ENCODE measurements at regions of chr10 and their contacts with region 1.

Region 1: DNA sequence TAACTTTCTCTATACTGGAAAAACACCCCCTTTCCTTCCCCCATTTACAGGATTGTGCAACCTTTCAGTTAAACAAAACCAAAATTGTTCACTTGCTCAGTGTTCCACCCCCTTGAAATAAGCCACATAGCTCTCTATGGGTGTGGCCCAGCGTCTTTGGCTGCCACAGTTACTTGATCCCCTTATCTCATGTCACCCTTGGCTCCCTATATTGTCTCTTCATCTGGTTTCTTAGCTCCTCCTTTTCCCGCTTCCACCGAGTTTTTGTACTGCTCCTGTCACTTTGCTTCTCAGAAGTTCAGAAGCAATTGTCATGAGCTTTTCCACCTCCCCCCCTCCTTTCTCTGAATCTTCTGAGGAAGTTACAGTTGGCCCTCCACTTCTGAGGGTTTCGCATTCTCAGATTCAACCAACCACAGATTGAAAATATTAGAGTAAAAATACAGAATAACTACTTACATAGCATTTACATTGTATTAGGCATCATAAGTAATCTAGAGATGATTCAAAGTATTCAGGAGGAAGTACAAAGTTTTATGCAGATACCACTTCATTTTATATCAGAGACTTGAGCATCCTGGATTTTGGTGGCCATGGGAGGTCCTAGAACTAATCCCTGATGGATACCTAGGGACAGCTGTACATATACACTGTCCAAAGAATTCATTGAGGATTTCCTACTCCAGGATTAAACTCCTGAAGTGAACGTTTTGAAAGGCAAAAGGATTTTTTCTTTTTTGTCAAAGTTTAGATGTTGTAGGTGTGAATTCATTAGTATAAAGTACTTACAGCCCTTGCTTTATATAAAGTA is 60.4 kb downstream of the ADD3 start:
- DNase-seq: peak; percentile 92
- H3K4me3 Mint-ChIP-seq: peak overlapping the region; percentile 72
- H3K27ac Mint-ChIP-seq: peak overlapping the region; percentile 90
- H3K4me1 Mint-ChIP-seq: peaks cover 72% of the 10 kb centered on the region
- H3K27me3 Mint-ChIP-seq: no peaks in the 10 kb centered on the region

Region 2: DNA sequence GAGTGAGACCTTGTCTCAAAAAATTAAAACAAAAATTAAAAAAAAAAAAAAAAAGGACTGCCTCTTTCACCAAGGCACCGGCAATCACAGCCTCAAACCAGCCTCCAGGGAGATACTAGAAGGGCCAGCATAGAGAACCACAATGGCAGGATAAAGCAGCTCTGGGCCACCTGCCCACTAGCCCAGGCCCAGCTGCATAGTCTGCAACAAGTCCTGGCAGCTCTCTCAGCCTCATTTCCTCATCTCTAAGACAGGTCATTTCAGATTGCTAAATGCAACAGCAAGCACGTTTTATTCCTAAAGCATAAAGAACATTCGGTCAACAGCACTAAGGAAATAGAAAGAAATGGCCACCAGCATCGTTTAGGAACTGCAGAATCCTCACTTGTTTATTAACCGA is 173.6 kb before region 1 on chr10:
- intact Hi-C with region 1: no loop called
- DNase-seq: no peak
- H3K4me3 Mint-ChIP-seq: no peak overlapping the region
- H3K27ac Mint-ChIP-seq: no peak overlapping the region
- H3K4me1 Mint-ChIP-seq: peaks cover 50% of the 10 kb centered on the region
- H3K27me3 Mint-ChIP-seq: no peaks in the 10 kb centered on the region

Region 3: GRCh38 chr10:110036640-110037039 is 31.5 kb before region 1 on chr10:
- intact Hi-C with region 1: no loop called
- DNase-seq: no peak
- H3K4me3 Mint-ChIP-seq: no peak overlapping the region
- H3K27ac Mint-ChIP-seq: no peak overlapping the region
- H3K4me1 Mint-ChIP-seq: peaks cover 43% of the 10 kb centered on the region
- H3K27me3 Mint-ChIP-seq: no peaks in the 10 kb centered on the region

Region 4: DNA sequence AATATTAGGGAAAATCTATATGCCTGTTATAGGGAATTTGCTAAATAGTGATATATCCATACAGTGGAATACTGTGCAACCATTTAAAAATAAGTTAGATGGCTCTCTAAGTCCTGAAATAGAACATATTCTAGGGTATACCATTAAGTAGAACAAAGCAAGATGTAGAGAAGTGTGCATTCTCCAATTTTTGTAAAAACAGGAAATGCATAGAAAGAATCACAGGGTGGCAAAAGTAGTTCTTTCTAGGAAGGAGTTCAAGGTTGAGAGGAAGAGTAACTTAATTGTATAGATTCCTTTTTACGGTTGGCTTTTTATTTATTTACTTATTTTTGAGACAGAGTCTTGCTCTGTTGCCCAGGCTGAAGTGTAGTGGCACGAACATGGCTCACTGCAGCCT is 16.7 kb before region 1 on chr10:
- intact Hi-C with region 1: loop called (anchors 2 kb)
- DNase-seq: no peak
- H3K4me3 Mint-ChIP-seq: no peak overlapping the region
- H3K27ac Mint-ChIP-seq: no peak overlapping the region
- H3K4me1 Mint-ChIP-seq: peaks cover 32% of the 10 kb centered on the region
- H3K27me3 Mint-ChIP-seq: no peaks in the 10 kb centered on the region

Region 5: GRCh38 chr10:110081911-110082310 is 13.7 kb after region 1 on chr10:
- intact Hi-C with region 1: loop called (anchors 1 kb)
- DNase-seq: no peak
- H3K4me3 Mint-ChIP-seq: peak overlapping the region; percentile 70
- H3K27ac Mint-ChIP-seq: peak overlapping the region; percentile 89
- H3K4me1 Mint-ChIP-seq: peaks cover 72% of the 10 kb centered on the region
- H3K27me3 Mint-ChIP-seq: no peaks in the 10 kb centered on the region

Region 6: DNA sequence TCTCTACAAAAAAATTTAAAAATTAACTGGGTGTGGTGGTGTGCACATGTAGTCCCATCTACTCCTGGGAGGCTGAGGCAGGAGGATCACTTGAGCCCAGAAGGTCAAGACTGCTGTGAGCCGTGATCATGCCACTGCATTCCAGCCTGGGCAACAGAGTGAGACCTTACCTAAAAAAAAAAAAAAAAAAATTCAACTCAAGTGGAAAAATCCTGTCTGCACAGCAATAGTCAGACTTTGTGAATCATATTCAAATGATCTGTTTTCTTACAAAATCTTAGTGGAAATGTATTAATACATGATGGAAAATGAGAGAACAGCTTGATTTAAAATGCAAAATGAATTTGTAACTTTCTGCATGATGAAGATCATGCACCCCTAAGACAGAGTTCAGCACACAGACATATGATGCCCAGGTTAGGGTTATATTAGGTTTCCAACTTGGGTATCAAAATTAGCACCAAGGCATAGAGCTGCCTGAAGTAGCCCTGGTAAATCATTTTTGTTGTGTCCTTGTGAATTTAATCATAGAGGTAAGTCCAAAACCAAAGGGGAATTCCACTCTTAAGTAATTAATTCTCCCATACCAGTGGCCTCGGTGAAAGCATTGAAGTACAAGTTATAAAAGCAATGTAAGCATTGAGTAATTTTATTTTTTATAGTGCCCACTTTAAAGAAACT is 33.4 kb after region 1 on chr10:
- intact Hi-C with region 1: loop called (anchors 5 kb)
- DNase-seq: no peak
- H3K4me3 Mint-ChIP-seq: peak overlapping the region; percentile 44
- H3K27ac Mint-ChIP-seq: peak overlapping the region; percentile 88
- H3K4me1 Mint-ChIP-seq: peaks cover 31% of the 10 kb centered on the region
- H3K27me3 Mint-ChIP-seq: no peaks in the 10 kb centered on the region

Region 7: DNA sequence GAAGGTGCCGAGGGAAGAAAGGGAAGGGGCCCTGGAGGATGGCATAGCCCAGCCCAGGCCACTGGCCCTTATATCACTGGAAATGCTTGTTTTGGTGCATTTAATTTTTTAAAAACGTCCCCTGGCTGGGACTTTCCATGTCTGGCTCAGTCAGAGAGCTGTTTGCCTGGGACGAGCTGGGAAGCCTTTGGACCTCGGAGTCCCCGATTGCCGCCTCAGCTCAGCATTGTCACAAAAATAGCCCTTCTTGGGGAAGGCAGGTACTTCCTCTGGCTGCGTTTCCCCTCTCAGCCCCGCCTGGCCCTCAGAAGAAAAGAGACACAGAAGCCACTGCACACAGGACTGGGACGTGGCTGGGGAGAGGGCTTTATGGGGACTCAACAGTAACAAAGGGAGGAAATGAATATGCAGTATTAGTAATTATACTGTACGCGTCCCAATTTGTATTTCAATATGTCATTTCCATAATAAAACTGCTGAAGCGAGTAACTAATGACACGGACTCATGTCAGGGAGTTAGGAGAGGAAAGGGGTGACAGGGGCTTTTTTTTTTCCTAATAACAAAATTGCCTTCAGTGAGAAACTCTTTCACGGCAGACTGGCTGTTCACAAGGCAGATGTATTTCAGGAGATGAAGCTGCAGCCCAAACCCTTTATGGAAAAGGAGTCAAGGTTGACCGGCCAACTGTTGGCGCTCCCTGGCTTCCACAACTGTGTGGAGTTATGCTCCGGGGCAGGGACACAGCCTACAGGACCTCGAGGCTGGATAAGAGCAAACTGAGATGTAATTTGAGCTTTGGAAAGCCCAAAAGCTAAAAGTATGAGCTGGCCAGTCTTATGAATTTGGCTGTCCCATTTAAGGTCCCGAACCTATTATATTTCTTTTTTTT is 108.2 kb after region 1 on chr10:
- intact Hi-C with region 1: no loop called
- DNase-seq: no peak
- H3K4me3 Mint-ChIP-seq: no peak overlapping the region
- H3K27ac Mint-ChIP-seq: no peak overlapping the region
- H3K4me1 Mint-ChIP-seq: peaks cover 6% of the 10 kb centered on the region
- H3K27me3 Mint-ChIP-seq: peaks cover 48% of the 10 kb centered on the region